ENCODE measurements at regions of chr1 and their contacts with region 1.

Region 1: GRCh38 chr1:100265931-100266740 is at the start of gene RTCA:
- DNase-seq: peak; percentile 95
- ATAC-seq: peak; percentile 93
- H3K4me3 Mint-ChIP-seq: peak within 1 kb of the TSS; percentile 94
- H3K27ac Mint-ChIP-seq: peak within 1 kb of the TSS; percentile 96
- H3K4me1 Mint-ChIP-seq: peaks cover 21% of the 10 kb centered on the region
- H3K27me3 Mint-ChIP-seq: no peaks in the 10 kb centered on the region
- total RNA-seq, gene RTCA: 47.7 to 48.1 TPM

Region 2: DNA sequence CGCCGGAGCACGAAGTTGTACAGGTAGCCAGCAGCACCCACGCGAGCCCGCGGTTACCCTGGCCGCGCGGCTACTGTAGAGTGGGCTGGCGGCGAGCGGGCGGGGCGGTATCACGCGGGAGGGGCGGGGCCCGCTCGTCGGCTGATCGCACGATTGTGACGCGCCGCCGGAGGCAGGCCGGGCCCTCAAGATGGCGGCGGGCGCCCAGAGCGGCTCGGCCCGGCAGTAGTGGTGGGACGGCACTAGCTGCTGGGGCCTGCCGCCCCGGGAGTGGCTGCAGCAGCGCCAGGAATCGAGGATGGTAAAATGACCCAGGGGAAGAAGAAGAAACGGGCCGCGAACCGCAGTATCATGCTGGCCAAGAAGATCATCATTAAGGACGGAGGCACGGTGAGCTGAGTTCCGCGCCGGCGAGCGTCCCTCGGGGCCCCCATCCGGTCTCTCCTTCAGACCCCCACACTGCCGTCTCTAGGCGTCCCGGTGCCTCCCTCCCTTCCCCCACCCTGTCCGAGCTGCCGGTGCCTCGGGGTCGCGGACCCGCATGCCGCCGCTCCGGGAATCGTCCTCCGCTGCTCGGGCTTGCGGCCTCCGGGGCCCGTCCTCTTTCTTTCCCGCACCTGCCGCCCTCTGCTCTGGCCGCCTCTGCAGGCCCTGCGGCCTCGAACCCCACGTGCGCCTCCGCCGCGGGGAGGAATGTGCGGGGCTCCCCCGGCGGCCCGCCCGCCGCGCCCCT is 228.0 kb before region 1 on chr1:
- POLR2A ChIA-PET with region 1: interaction called, 13 read pairs
- DNase-seq: peak; percentile 94
- ATAC-seq: peak; percentile 87
- H3K4me3 Mint-ChIP-seq: peak overlapping the region; percentile 97
- H3K27ac Mint-ChIP-seq: peak overlapping the region; percentile 100
- H3K4me1 Mint-ChIP-seq: peaks cover 41% of the 10 kb centered on the region
- H3K27me3 Mint-ChIP-seq: no peaks in the 10 kb centered on the region

Region 3: DNA sequence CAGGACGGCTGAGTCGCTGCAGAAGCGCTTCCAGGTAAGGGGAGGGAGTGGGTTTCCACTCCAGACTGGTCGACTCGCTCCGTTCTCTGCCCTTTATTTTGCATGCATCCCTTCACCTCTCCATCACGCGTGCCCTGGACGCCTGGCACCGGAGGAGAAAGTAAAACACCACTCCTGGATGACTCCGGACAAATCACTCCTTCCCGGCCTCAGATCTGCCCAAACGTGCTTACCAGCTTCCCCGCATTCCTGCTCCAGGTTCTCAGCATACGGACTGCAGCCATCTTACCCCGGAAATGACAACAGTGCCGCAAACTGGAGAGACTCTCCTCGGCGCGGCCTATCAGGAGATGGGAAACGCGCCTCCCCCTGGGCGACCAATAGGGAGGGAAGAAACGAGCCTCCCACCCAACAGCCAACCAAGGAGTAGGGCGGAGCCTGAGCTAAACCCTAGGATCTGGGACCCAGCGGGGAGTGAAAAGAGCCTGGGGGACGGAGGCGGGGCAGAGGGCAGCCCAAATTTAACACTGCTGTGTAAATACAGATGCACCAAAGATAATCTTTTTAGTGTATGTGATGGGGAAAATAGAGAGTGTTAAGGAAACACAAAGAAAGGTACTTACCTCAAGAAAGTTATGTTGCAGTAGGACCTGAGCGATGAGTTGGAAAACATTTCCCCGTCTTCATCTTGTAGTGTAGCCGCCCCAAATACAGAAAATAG is 16.4 kb before region 1 on chr1 and contains the start of gene DBT:
- POLR2A ChIA-PET with region 1: interaction called, 56 read pairs
- DNase-seq: peak; percentile 83
- ATAC-seq: peak; percentile 100
- H3K4me3 Mint-ChIP-seq: no peak within 1 kb of the TSS
- H3K27ac Mint-ChIP-seq: no peak within 1 kb of the TSS
- H3K4me1 Mint-ChIP-seq: peaks cover 13% of the 10 kb centered on the region
- H3K27me3 Mint-ChIP-seq: peaks cover 7% of the 10 kb centered on the region
- total RNA-seq, gene DBT: 12.2 to 13.4 TPM

Region 4: DNA sequence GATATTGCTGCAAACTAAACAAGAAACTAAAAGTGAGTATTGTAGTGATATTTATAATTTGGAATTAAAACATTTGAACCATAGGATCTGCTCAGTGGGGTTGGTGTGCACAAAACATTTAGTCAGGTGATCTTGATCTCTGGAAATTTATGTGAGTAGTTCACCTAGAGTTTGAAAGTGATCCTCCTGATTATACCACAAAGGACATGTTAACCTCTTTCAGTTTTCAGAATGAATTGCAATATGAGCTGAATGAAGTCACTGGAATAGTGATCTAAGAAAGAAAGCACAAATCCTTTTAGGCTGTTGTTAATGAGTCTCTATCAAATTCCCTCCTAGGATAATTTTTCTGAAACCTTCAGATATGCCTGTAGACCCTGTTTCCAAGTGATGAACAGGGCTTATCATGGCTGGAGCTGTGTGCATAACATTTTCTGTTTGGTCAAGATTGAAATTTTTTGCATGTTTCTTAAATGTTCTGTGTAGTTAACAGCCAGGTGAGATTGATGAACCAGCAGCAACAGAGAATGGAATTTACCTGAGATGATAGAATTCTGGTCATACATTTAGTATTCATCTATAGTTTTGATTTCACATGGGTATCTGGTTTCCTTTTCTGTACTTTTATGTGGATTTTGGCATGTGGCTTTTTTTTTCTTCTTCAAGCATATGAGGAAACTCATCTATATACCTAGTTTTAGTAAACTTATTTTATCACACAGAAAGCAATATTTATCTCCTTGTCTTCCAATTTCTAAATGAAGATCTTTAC is 111.6 kb after region 1 on chr1:
- POLR2A ChIA-PET with region 1: no interaction called
- DNase-seq: no peak
- ATAC-seq: peak; percentile 83
- H3K4me3 Mint-ChIP-seq: peak overlapping the region; percentile 49
- H3K27ac Mint-ChIP-seq: peak overlapping the region; percentile 67
- H3K4me1 Mint-ChIP-seq: peaks cover 37% of the 10 kb centered on the region
- H3K27me3 Mint-ChIP-seq: no peaks in the 10 kb centered on the region

Measured in activated naive CD8-positive, alpha-beta T cell treated with anti-CD3 and anti-CD28 coated beads, Interleukin-2, amount 10 ng/mL, durations not matched to agents 7 days and 5 days (primary cell).